ENCODE measurements at regions of chr20 and their contacts with region 1.

Region 1: DNA sequence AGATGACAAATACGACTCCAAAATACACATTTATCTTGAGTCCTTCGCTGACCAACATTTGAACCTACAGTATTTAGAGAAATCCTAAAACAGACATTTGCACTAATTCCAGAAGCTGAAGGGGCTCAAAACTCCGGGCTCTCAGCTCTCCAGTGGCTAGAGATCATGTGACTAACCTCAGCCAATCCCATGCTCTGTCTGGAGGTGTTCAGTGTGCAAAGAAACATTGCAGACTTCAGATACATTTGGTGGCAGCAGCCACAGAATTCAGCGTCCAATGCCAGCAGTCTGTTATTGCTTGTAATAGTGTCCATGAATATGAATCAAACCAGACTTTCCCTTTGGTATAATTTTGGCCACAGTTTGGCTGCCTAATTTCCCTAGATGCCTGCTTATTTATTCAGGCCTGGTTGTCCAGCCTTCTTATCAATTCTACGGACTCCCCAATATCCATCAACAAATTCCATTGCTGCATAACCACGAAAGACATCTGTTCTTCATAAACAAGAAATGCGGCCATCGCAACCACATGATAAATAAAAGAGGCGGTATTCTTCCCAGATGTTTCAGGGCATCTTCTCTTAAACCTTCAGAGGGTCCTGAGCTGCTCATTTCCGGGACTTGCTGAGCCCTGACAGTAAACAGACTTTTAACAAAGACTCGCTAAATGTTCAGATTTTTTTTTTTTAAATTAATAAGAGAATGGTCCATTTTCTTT is 14.5 kb upstream of the CYP24A1 start:
- DNase-seq: no peak

Region 2: GRCh38 chr20:53809183-53809582 is 379.1 kb before region 1 on chr20:
- intact Hi-C with region 1: no loop called
- DNase-seq: no peak

Region 3: DNA sequence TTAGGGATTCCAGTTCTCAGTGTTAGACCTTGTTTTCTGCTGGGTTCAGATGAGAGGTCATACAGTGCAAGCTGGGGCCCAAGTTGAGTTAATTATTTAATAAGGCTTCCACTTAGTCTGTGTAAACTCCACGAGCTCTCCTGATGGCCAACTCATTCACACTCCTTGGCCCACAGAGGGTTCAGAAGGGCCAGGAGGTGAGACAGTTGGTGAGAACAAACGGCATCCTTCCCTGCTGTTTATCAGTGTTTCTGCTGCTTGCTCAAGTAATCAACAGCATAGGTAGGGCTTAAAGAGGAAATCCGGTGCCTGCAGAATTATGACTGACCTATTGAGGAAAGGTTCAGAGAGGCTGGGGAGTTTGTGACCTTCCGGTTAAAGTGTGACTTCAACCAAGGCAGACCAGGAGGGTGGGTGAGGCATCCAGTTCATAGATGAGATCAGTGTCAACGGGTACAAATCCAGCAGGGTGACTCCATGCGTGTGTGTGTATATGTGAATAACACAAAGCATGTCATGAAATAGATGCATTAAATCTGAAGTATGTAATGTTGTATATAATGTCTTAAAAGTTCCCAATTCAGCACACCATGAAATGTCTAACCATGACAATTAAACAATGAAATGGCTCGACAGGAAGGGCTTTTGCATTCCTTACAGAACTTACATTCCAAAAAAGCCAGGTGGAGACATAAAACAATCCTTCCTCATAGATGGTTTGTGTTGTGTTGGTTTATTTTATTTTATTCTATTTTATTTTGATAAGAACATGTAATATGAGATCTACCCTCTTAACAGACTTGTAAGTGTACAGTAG is 80.5 kb before region 1 on chr20:
- intact Hi-C with region 1: loop called in 1 of 2 experiments (anchors 5 kb)
- DNase-seq: no peak

Region 4: GRCh38 chr20:54407459-54407858 is 219.2 kb after region 1 on chr20:
- intact Hi-C with region 1: no loop called
- DNase-seq: no peak

Region 5: DNA sequence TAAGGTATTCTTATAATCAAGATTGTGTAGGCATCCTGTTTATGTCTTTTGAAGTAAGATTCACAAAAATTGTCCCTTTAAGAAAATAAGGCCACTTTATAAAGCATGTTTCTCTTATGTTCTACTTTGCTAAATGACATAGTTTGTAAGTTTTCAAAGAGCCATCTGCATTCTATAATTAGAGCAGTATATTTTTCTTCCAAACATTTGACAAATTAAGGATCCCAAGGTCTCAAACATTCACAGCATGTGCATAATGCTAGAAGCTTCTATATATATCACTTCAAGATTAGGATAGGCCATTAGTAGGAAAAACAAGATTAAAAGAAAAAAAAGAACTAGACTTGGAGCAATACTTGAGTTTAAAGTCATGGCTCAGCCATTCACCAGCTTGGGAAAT is 231.2 kb after region 1 on chr20:
- intact Hi-C with region 1: no loop called
- DNase-seq: no peak